Heart right ventricle (tissue), 16 donors: ENCODE measurements at regions of chr21 and their contacts with region 1.

Region 1: GRCh38 chr21:42258153-42258884 is 39.4 kb downstream of the ABCG1 start:
- DNase-seq: peak; percentile 65 to 80
- ATAC-seq: peak in 7 of 8 donors; percentile 42 to 71 (median 59)
- H3K4me3 ChIP-seq: no peak overlapping the region
- H3K27ac ChIP-seq: peak overlapping the region in 1 of 10 donors; percentile 29
- H3K4me1 ChIP-seq: peaks cover 13 to 73% (median 46%) of the 10 kb centered on the region in 9 donors
- H3K27me3 ChIP-seq: no peaks in the 10 kb centered on the region
- CTCF ChIP-seq: peak; percentile 61 to 92 (median 78)

Region 2: GRCh38 chr21:42156690-42157577 is 101.4 kb before region 1 on chr21:
- intact Hi-C with region 1: loop called in 6 of 10 experiments (anchors 5 to 10 kb)
- DNase-seq: peak; percentile 35 to 38
- ATAC-seq: peak in 4 of 8 donors; percentile 26 to 56 (median 38)
- H3K4me3 ChIP-seq: no peak overlapping the region
- H3K27ac ChIP-seq: no peak overlapping the region
- H3K4me1 ChIP-seq: peaks cover 0 to 11% (median 0%) of the 10 kb centered on the region in 9 donors
- H3K27me3 ChIP-seq: peaks cover 0 to 9% (median 0%) of the 10 kb centered on the region in 7 donors
- CTCF ChIP-seq: no peak

Region 3: DNA sequence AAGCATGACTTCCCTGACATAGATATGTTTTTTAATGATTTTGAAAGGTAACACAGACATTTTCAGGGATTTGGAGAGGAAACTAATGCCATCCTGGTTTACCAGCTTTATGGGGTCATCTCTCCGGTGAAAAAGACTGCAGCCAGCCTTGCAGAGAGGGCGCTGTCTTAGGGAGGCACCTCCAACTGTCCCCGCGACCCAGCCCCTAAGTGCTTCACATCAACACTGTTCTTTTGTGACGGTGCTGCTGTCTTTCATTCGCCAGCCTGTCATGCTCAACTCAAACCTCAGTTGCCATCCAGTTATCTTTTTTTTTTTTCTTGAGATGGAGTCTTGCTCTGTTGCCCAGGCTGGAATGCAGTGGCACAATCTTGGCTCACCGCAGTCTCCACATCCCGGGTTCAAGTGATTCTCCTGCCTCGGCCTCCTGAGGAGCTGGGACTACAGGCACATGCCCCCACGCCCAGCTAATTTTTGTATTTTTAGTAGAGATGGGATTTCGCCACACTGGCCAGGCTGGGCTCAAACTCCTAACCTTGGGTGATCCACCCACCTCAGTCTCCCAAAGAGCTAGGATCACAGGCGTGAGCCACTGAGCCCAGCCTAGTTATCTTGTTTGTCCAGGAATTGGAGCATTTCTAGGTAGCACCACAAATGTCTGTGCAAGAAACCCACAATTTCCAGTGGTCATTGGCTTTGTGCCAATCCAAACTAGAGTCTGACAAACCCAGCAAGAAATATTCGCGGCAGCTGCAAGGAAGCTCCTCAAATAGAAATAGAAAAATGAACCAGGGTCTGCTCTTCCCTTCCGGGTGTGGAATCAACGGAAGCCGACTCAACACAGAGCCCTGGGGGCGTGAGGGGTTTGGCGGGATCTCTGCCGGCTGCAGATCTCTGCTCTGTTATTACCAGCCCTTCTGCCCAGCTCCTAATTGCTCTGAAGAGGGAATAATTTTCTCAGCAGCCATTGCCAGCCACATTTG is 419.3 kb after region 1 on chr21:
- intact Hi-C with region 1: no loop called
- DNase-seq: peak in 1 of 2 donors; percentile 34
- ATAC-seq: peak in 1 of 8 donors; percentile 2
- H3K4me3 ChIP-seq: no peak overlapping the region
- H3K27ac ChIP-seq: peak overlapping the region in 3 of 10 donors; percentile 34 to 51 (median 40)
- H3K4me1 ChIP-seq: peaks cover 0 to 41% (median 22%) of the 10 kb centered on the region in 9 donors
- H3K27me3 ChIP-seq: peaks cover 0 to 26% (median 4%) of the 10 kb centered on the region in 7 donors
- CTCF ChIP-seq: no peak